ENCODE measurements at regions of chr14 and their contacts with region 1.

Region 1: GRCh38 chr14:24806061-24806678 is 172.2 kb upstream of the GZMB start:
- DNase-seq: peak; percentile 58

Region 2: GRCh38 chr14:25042362-25043299 is 236.5 kb after region 1 on chr14:
- CTCF ChIA-PET with region 1: interaction called, 29 read pairs
- POLR2A ChIA-PET with region 1: no interaction called
- DNase-seq: peak; percentile 39

Region 3: DNA sequence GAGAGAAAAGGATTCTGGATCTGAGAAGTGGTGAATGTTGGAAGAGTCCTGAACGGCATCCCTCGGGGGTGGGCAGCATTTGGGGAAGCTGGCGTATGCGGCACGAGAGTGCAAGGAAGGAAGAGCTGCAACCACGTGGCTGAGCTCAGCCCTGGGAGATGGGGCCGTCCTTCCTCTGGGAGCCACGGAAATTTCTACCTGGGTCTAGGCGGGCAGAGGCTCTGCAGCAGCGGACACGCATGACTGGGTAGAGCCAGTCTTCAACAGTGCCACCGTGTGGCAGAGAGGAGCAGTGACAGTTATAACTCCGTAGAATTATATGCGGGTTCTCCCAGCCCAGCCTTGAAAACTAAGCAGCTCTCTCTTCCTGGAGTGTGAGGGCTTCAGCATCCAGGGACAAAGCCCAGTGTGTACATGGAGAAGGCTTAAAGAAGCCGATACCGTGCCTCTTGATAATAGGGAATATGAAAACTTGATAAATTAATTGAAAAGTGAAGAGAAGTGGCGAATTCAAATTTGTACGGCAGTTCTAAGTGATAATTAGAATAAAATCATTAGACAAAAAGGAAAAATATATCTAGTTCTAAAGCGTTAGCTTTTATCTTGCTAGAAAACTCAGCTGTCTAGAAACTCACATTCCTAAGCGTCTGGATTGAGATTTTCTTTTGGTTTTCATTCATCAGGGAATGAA is 326.7 kb after region 1 on chr14:
- CTCF ChIA-PET with region 1: interaction called, 23 read pairs
- POLR2A ChIA-PET with region 1: no interaction called
- DNase-seq: peak; percentile 76

Measured in HEK293T (cell line).